B cell (primary cell): ENCODE measurements at regions of chr12 and their contacts with region 1.

Region 1: GRCh38 chr12:26188127-26188526 is 7.2 kb upstream of the SSPN start:
- DNase-seq: no peak
- ATAC-seq: no peak
- H3K4me3 ChIP-seq: no peak overlapping the region
- H3K4me3 Mint-ChIP-seq: no peak overlapping the region
- H3K27ac ChIP-seq: no peak overlapping the region
- H3K27ac Mint-ChIP-seq: no peak overlapping the region
- H3K4me1 ChIP-seq: peaks cover 0 to 3% of the 10 kb centered on the region in 2 donors
- H3K4me1 Mint-ChIP-seq: peaks cover 23% of the 10 kb centered on the region
- H3K27me3 ChIP-seq: peaks cover 0 to 3% (median 0%) of the 10 kb centered on the region in 4 experiments
- H3K27me3 Mint-ChIP-seq: no peaks in the 10 kb centered on the region
- CTCF ChIP-seq: no peak

Region 2: GRCh38 chr12:25829192-25829591 is 358.9 kb before region 1 on chr12:
- CTCF ChIA-PET with region 1: no interaction called
- POLR2A ChIA-PET with region 1: no interaction called
- intact Hi-C with region 1: no loop called
- DNase-seq: no peak
- ATAC-seq: no peak
- H3K4me3 ChIP-seq: no peak overlapping the region
- H3K4me3 Mint-ChIP-seq: no peak overlapping the region
- H3K27ac ChIP-seq: no peak overlapping the region
- H3K27ac Mint-ChIP-seq: no peak overlapping the region
- H3K4me1 ChIP-seq: no peaks in the 10 kb centered on the region
- H3K4me1 Mint-ChIP-seq: no peaks in the 10 kb centered on the region
- H3K27me3 ChIP-seq: peaks cover 0 to 3% (median 0%) of the 10 kb centered on the region in 4 experiments
- H3K27me3 Mint-ChIP-seq: peaks cover 10% of the 10 kb centered on the region
- CTCF ChIP-seq: no peak

Region 3: GRCh38 chr12:26032719-26033241 is 155.3 kb before region 1 on chr12:
- CTCF ChIA-PET with region 1: no interaction called
- POLR2A ChIA-PET with region 1: no interaction called
- intact Hi-C with region 1: no loop called
- DNase-seq: no peak
- ATAC-seq: no peak
- H3K4me3 ChIP-seq: no peak overlapping the region
- H3K4me3 Mint-ChIP-seq: no peak overlapping the region
- H3K27ac ChIP-seq: no peak overlapping the region
- H3K27ac Mint-ChIP-seq: no peak overlapping the region
- H3K4me1 ChIP-seq: no peaks in the 10 kb centered on the region
- H3K4me1 Mint-ChIP-seq: no peaks in the 10 kb centered on the region
- H3K27me3 ChIP-seq: no peaks in the 10 kb centered on the region
- H3K27me3 Mint-ChIP-seq: no peaks in the 10 kb centered on the region
- CTCF ChIP-seq: no peak

Region 4: DNA sequence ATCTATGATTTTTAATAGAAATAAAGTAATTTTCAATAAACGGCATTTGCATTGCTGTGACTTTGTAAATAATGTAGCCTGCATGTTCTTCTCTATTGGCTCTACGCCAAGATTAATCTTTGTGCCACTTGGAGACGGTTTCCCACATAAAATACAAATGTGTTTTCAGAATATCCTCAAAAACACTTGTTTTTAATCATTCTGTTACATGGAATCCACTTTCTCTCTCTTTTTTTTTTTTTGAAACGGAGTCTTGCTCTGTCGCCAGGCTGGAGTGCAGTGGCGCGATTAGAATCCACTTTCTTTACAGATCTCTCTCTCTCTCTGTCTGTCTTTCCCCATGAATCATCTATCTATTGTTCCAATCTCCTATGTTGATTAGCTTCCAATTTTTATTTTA is 15.6 kb before region 1 on chr12:
- CTCF ChIA-PET with region 1: no interaction called
- POLR2A ChIA-PET with region 1: no interaction called
- intact Hi-C with region 1: loop called (anchors 2 kb)
- DNase-seq: no peak
- ATAC-seq: no peak
- H3K4me3 ChIP-seq: no peak overlapping the region
- H3K4me3 Mint-ChIP-seq: no peak overlapping the region
- H3K27ac ChIP-seq: no peak overlapping the region
- H3K27ac Mint-ChIP-seq: no peak overlapping the region
- H3K4me1 ChIP-seq: peaks cover 4 to 5% of the 10 kb centered on the region in 2 donors
- H3K4me1 Mint-ChIP-seq: peaks cover 19% of the 10 kb centered on the region
- H3K27me3 ChIP-seq: no peaks in the 10 kb centered on the region
- H3K27me3 Mint-ChIP-seq: no peaks in the 10 kb centered on the region
- CTCF ChIP-seq: no peak

Region 5: GRCh38 chr12:26226629-26227360 is 38.7 kb after region 1 on chr12:
- CTCF ChIA-PET with region 1: no interaction called
- POLR2A ChIA-PET with region 1: no interaction called
- intact Hi-C with region 1: no loop called
- DNase-seq: peak; percentile 47
- ATAC-seq: peak; percentile 31
- H3K4me3 ChIP-seq: peak overlapping the region in 3 of 5 experiments; percentile 19 to 42 (median 38)
- H3K4me3 Mint-ChIP-seq: peak overlapping the region; percentile 81
- H3K27ac ChIP-seq: no peak overlapping the region
- H3K27ac Mint-ChIP-seq: no peak overlapping the region
- H3K4me1 ChIP-seq: peaks cover 11 to 13% of the 10 kb centered on the region in 2 donors
- H3K4me1 Mint-ChIP-seq: peaks cover 15% of the 10 kb centered on the region
- H3K27me3 ChIP-seq: peaks cover 0 to 19% (median 5%) of the 10 kb centered on the region in 4 experiments
- H3K27me3 Mint-ChIP-seq: peaks cover 11% of the 10 kb centered on the region
- CTCF ChIP-seq: no peak